ENCODE measurements at regions of chr17 and their contacts with region 1.

Region 1: DNA sequence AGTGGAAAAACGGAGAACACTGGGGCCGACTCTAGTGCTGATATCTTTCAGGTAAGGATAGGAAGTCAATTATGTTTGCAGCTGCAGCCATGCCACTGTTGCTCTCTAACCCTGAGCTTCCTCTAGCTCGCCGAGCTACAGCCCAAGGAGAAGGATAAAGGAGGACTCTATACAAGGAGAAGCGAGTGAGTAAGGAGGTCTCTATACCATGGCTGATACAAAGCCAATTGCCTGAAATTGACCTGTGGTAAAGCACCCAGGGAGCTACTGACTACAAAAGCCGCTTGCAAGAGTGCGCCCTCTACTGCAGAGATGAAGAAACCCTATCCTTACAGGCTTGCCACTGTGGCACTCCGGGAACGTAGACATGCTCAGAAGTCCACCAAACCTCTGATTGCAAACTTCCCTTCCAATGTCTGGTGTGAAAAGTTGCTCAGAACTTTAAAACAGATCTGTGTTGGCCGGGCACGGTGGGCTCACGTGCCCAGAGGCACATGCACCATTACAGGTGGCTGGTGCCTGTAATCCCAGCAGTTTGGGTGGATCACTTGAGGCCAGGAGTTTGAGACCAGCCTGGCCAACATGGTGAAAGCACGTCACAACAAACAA is 10.8 kb upstream of the SLC46A1 start:
- DNase-seq: peak; percentile 65
- H3K4me3 Mint-ChIP-seq: no peak overlapping the region
- H3K27ac Mint-ChIP-seq: no peak overlapping the region
- H3K4me1 Mint-ChIP-seq: no peaks in the 10 kb centered on the region
- H3K27me3 Mint-ChIP-seq: peaks cover 3% of the 10 kb centered on the region

Region 2: GRCh38 chr17:28230011-28230410 is 186.8 kb before region 1 on chr17:
- CTCF ChIA-PET with region 1: interaction called, 8 read pairs
- POLR2A ChIA-PET with region 1: no interaction called
- intact Hi-C with region 1: loop called (anchors 10 kb)
- DNase-seq: peak; percentile 65
- H3K4me3 Mint-ChIP-seq: no peak overlapping the region
- H3K27ac Mint-ChIP-seq: no peak overlapping the region
- H3K4me1 Mint-ChIP-seq: peaks cover 11% of the 10 kb centered on the region
- H3K27me3 Mint-ChIP-seq: peaks cover 45% of the 10 kb centered on the region

Region 3: GRCh38 chr17:28325211-28325610 is 91.6 kb before region 1 on chr17:
- CTCF ChIA-PET with region 1: no interaction called
- POLR2A ChIA-PET with region 1: no interaction called
- intact Hi-C with region 1: no loop called
- DNase-seq: no peak
- H3K4me3 Mint-ChIP-seq: no peak overlapping the region
- H3K27ac Mint-ChIP-seq: no peak overlapping the region
- H3K4me1 Mint-ChIP-seq: peaks cover 35% of the 10 kb centered on the region
- H3K27me3 Mint-ChIP-seq: no peaks in the 10 kb centered on the region

Region 4: DNA sequence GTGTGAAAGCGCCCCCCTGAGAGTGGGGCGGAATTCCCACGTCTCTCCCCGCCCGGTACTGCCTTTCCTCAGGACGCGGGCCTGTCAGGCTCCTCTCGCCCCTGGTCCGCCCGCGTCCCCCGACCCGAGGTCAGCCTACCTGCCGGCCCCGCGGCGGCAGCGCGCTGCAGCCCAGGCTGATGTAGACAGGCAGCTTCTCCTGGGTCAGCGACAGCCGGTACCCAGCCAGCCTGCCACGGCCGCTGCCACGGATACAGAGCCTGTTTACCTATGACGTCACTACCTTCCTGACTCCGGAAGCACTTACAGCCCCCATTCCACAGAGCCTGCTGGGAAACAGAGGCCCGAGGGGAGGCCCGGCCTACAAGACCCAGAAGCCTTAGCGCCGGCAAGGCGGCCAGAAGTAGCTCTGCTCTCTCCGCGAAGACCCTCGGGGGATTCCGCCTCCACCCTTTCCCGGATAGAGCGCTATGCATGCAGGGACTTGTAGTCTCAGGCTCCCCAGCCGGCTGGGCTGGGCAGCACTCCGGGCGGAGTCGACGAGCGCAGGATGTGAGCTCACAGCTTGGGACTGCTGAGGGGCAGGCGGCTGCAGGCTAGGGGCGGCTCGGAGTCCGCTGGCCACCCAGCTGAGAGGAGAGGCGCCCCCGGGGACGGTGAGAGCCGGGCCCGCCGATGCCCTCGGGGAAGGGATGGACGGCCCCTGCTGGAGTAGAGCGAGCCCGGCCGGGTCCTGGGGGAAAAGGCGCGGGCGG is 81.4 kb before region 1 on chr17 and contains the starts of genes IFT20 and TNFAIP1:
- CTCF ChIA-PET with region 1: interaction called, 11 read pairs
- POLR2A ChIA-PET with region 1: no interaction called
- intact Hi-C with region 1: no loop called
- DNase-seq: peak; percentile 99
- H3K4me3 Mint-ChIP-seq: peak within 1 kb of the TSS; percentile 94
- H3K27ac Mint-ChIP-seq: peak within 1 kb of the TSS; percentile 87
- H3K4me1 Mint-ChIP-seq: peaks cover 36% of the 10 kb centered on the region
- H3K27me3 Mint-ChIP-seq: no peaks in the 10 kb centered on the region
- total RNA-seq, gene IFT20: 20.3 to 20.6 TPM
- total RNA-seq, gene TNFAIP1: 24.4 to 27.3 TPM

Region 5: GRCh38 chr17:28384281-28385036 is 32.3 kb before region 1 on chr17:
- CTCF ChIA-PET with region 1: interaction called, 7 read pairs
- POLR2A ChIA-PET with region 1: no interaction called
- intact Hi-C with region 1: loop called (anchors 2 kb)
- DNase-seq: peak; percentile 84
- H3K4me3 Mint-ChIP-seq: peak overlapping the region; percentile 88
- H3K27ac Mint-ChIP-seq: peak overlapping the region; percentile 59
- H3K4me1 Mint-ChIP-seq: peaks cover 25% of the 10 kb centered on the region
- H3K27me3 Mint-ChIP-seq: no peaks in the 10 kb centered on the region

Region 6: GRCh38 chr17:28398280-28398981 is 18.4 kb before region 1 on chr17:
- CTCF ChIA-PET with region 1: interaction called, 28 read pairs
- POLR2A ChIA-PET with region 1: no interaction called
- intact Hi-C with region 1: no loop called
- DNase-seq: no peak
- H3K4me3 Mint-ChIP-seq: no peak overlapping the region
- H3K27ac Mint-ChIP-seq: no peak overlapping the region
- H3K4me1 Mint-ChIP-seq: peaks cover 6% of the 10 kb centered on the region
- H3K27me3 Mint-ChIP-seq: no peaks in the 10 kb centered on the region

Region 7: DNA sequence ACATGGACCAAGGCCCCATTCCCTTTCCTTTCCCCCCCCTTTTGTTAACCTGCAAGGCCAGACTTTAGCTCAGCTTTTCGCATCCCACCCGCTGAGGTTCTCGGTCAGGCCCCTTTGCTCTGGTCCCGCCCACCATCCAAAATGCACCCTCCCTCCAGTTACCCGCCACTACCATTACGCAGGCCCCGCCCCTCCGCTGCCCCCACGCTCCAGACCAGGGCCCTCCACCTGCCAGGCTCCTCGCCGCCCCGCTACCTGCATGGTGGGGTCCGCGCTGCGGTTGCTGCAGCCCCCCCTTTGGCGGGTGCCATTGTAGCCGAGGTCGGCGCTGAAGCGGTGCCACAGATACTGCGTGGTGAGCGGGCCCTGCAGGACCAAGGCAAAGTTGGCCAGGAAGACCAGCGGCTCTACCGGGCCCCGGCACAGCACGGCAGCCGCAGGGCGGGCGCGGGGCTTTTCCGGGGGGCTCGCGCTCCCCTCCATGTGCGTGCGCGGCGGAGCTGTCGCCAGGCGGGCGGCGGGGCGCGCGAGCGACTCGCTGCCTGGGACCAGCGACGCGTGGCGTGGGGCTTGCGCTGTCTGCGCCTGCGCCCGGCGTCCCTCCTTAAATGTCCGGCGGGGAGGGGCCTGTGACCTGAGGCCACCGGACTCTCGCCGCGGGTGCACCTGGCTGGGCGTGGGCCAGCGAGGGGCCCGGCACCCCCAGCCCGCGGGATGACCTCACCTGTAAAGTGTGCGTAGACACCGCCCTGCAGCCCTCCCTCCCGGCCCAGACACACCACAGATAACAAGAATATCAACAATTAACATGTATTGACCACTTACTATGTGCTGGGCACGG is 11.0 kb before region 1 on chr17 and contains the start of gene SLC46A1:
- CTCF ChIA-PET with region 1: interaction called, 28 read pairs
- POLR2A ChIA-PET with region 1: no interaction called
- intact Hi-C with region 1: no loop called
- DNase-seq: peak; percentile 67
- H3K4me3 Mint-ChIP-seq: peak within 1 kb of the TSS; percentile 75
- H3K27ac Mint-ChIP-seq: no peak within 1 kb of the TSS
- H3K4me1 Mint-ChIP-seq: peaks cover 13% of the 10 kb centered on the region
- H3K27me3 Mint-ChIP-seq: peaks cover 2% of the 10 kb centered on the region
- total RNA-seq, gene SLC46A1: 2.3 to 2.9 TPM

Region 8: DNA sequence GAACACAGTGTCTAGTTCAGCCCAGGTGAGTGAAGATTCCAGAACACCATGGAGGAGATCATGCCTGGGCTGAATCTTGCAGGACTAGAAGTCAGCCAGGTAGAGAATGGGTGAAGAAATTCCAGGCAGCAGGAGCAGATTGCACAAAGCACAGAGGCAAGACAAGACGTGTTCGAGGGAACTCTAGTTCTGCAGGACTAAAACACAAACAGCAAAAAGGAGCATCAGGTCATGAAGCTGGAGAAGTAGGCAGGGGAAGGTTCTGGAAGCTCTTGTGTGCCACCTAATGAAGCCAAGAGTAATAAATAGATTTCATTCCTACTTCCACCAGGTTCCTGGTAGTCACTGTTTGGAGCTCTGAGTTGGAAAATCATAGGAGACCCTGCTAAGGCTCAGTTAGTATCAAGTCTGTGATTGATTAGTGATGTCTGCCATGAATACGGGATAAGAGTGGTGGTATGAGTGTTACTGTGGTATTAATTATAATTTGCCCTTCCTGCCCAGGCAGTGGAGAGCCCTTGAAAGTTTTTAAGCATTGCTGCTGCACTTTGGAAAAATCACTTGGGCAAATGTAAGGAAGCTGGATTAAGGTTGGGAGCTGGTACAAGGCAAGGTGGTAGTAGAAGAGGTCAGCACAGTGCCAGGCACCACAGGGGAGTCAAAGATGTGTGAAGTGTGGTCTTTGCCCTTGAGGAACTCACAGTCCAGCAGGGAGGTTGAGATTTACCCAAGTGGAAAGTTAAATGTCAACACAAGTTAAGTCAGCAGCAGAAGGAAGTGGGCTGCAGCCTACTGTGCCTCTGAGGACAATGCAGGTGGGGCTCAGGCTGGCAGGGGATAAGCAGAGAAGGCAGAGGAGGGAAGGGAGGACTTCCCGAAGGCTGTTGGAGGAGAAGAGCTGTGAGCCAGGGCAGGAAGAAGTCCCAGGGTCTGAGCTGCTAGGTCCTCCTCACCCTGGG is 75.8 kb after region 1 on chr17:
- CTCF ChIA-PET with region 1: no interaction called
- POLR2A ChIA-PET with region 1: no interaction called
- intact Hi-C with region 1: no loop called
- DNase-seq: no peak
- H3K4me3 Mint-ChIP-seq: no peak overlapping the region
- H3K27ac Mint-ChIP-seq: no peak overlapping the region
- H3K4me1 Mint-ChIP-seq: no peaks in the 10 kb centered on the region
- H3K27me3 Mint-ChIP-seq: peaks cover 3% of the 10 kb centered on the region